PC-9 (cell line): ENCODE measurements at regions of chr9 and their contacts with region 1.

Region 1: GRCh38 chr9:109771084-109771483 is 8.9 kb upstream of the PALM2AKAP2 start:
- DNase-seq: peak in 1 of 2 experiments; percentile 46
- H3K4me3 ChIP-seq: no peak overlapping the region
- H3K27ac ChIP-seq: no peak overlapping the region
- H3K4me1 ChIP-seq: peaks cover 26% of the 10 kb centered on the region
- H3K27me3 ChIP-seq: no peaks in the 10 kb centered on the region
- CTCF ChIP-seq: no peak

Region 2: GRCh38 chr9:109717342-109717741 is 53.7 kb before region 1 on chr9:
- CTCF ChIA-PET with region 1: no interaction called
- POLR2A ChIA-PET with region 1: no interaction called
- intact Hi-C with region 1: loop called (anchors 5 kb)
- DNase-seq: no peak
- H3K4me3 ChIP-seq: no peak overlapping the region
- H3K27ac ChIP-seq: peak overlapping the region; percentile 87
- H3K4me1 ChIP-seq: peaks cover 43% of the 10 kb centered on the region
- H3K27me3 ChIP-seq: no peaks in the 10 kb centered on the region
- CTCF ChIP-seq: no peak

Region 3: GRCh38 chr9:109792951-109793546 is 22.0 kb after region 1 on chr9:
- CTCF ChIA-PET with region 1: no interaction called
- POLR2A ChIA-PET with region 1: no interaction called
- intact Hi-C with region 1: no loop called
- DNase-seq: peak; percentile 53 to 92
- H3K4me3 ChIP-seq: no peak overlapping the region; the same call in 1 of the 2 replicates
- H3K27ac ChIP-seq: peak overlapping the region; percentile 85
- H3K4me1 ChIP-seq: peaks cover 35% of the 10 kb centered on the region
- H3K27me3 ChIP-seq: no peaks in the 10 kb centered on the region
- CTCF ChIP-seq: no peak